ENCODE measurements at regions of chr9 and their contacts with region 1.

Region 1: DNA sequence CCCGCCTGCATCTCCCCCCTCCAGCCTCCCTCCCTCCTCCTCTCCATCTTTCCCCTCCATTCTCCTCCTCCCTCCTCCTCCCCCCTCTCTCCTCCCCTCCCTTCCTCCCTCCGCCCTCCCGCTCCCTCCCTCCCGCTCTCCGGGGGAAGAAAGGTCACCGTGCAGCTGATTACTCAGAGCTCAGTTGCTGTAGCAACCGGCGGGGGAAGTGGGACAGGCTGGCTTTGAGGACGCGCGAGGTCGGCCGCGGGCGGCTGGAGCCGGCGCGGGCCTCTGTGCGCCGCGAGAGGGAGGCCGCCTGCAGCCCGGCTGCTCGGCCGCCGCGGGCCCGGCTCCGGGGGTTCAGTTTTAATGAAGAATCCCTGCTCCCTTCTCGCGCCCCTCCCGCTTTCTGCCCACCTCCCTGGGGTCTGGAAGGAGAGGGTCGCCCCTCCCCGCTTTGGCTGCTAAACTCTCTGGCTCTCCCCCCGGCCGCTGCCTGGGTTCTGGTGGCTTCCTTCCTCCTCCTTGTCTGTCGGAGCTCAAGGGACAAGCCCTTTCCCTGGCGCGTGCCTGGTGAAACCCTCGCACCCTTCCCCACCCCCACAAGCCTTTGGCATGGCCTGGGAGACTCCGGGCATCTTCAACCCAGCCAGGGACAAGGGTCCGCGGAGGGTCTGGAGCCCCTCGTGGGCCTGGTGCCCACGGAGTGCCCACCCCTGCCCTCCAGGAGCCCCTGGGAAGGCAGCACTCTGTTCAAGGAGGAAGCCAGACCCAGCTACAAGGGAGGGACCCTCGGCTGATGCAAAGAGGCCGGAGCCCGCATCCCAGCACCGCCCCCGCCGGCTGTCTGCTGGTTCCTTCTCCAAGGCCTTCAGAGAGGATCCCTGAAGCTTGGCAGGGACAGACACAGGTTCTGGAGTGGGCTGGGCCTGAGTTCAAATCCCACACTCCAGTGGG is 160.3 kb downstream of the C9orf50 start:
- DNase-seq: peak; percentile 96
- H3K4me3 ChIP-seq: peak overlapping the region; percentile 55
- H3K27ac ChIP-seq: peak overlapping the region; percentile 99
- H3K27me3 ChIP-seq: no peaks in the 10 kb centered on the region
- CTCF ChIP-seq: peak; percentile 27; the same call in 1 of the 2 replicates

Region 2: DNA sequence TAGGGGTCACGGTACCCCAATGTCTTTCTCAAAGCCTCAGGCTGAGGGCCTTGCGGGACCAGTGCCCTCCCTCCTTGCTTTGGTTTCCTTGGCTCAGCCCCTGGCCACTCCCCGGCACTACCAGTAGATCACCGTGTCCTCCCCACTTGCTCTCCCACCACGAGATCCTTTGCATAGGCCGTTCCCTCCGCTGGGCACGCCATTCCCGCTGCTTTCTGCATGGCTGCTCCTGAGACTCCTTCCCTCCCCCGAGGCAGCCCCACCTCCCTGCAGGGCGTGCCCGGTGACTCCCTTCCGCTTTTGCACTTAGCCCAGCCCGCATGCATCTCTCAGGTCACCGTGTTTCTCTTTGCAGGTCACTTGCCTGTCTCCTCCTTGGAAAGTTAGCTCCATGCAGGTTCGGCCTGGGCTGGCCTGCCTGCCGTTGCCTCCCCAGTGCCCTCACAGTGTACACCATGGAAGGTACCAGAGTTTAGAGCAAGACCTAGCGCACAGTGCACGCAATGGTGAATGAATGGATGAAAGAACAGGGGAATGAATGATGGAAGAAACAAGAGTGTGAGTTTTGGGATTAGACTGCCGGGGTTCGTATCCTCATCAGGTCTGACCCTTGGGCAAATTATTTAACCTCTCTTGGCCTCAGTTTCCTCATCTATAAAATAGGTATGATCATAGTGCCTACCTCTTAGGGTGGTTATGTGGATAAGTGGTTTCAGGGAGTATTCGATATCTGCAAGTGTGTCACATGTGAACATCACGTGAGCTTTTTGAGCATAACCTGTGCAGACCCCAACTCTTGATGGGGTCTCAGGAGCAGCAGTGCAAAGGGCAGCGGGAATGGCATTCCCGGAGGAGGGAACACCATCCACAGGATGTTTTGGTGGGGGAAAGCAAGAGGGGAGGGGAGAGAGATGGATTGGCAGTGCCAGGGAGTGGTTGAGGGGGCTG is 54.0 kb before region 1 on chr9:
- CTCF ChIA-PET with region 1: no interaction called
- POLR2A ChIA-PET with region 1: no interaction called
- DNase-seq: no peak
- H3K4me3 ChIP-seq: no peak overlapping the region
- H3K27ac ChIP-seq: no peak overlapping the region
- H3K27me3 ChIP-seq: no peaks in the 10 kb centered on the region
- CTCF ChIP-seq: no peak

Region 3: DNA sequence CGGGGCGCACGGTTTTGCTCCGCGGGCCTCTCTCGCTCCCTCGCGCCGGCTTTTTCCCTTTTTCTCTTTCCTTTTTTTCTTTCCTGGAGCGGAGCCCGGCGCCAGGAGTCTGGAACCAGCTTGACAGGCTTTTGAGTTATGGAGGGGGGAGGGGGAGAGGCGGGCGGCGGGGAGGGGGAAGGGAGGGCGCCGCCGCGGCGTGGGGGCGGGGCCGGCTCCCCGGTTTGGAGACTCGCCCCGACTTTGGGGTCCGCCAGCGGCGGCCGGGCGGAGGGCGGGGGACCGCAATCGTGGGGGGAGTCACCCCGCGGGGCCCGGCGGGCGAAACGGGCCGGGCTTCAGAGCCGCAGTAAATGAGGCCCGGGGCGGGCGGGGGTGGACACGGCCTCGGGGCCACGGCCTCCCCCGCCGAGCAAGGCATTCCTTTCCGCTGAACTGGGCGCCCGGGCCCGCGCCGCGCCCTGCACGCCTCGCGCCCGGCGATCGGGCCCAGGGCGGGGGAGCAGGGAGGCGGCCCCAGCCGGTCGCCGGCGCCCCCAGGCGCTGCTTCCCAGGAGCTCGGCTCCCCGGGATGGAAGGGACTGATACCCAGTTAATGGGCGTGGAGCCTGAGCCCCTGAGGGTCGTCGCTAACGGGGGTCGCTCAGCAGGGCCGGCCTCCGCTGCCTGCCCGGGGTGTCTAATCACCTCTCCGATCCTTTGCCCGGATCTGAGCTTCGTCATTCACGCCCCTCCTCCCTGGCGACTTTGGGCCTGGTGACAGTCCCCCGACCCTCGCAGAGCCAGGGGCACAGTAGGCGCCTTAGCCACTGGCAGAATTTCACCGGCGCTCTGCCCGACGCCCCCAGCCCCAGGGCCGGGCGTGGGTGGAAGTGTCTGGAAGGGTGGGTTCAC is 22.2 kb after region 1 on chr9:
- CTCF ChIA-PET with region 1: interaction called, 3 read pairs
- POLR2A ChIA-PET with region 1: interaction called, 29 read pairs
- DNase-seq: no peak
- H3K4me3 ChIP-seq: peak overlapping the region; percentile 44
- H3K27ac ChIP-seq: peak overlapping the region; percentile 100
- H3K27me3 ChIP-seq: no peaks in the 10 kb centered on the region
- CTCF ChIP-seq: no peak

Region 4: DNA sequence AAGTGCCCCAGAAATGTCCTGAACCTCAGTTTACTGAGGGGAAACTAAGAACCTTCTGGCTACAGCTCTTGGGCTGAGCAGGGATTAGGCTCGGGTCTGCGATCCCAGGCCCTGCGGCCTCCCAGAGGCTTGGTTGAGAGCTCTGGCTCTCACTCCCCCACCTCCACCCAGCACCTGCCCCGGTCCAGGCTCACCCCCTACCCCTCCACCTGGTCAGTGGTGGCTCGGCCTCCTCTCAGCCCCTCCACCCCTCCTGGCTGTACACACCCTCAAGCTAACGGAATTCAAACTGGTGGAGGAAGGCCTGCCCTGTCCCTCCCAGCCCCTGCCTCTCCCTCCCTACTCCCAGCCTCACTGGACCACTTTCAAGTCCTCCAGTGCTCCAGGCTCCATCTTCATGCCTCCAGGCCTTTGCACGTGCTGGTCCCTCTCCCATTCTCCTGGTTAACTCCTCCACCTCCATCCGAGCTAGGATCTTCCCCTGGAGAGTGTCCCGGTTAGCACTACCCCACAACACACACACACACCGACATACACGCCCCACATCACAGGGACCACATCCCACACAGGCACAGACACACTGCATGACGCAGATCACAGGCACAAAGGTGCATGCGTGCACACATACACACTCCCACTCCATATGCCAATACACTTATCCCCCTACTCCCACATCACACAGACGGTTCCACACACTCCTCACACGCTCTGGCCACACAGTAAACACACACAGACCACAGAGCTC is 29.4 kb after region 1 on chr9:
- CTCF ChIA-PET with region 1: no interaction called
- POLR2A ChIA-PET with region 1: interaction called, 10 read pairs
- DNase-seq: no peak
- H3K4me3 ChIP-seq: peak overlapping the region; percentile 52
- H3K27ac ChIP-seq: peak overlapping the region; percentile 99
- H3K27me3 ChIP-seq: no peaks in the 10 kb centered on the region
- CTCF ChIP-seq: no peak

Region 5: DNA sequence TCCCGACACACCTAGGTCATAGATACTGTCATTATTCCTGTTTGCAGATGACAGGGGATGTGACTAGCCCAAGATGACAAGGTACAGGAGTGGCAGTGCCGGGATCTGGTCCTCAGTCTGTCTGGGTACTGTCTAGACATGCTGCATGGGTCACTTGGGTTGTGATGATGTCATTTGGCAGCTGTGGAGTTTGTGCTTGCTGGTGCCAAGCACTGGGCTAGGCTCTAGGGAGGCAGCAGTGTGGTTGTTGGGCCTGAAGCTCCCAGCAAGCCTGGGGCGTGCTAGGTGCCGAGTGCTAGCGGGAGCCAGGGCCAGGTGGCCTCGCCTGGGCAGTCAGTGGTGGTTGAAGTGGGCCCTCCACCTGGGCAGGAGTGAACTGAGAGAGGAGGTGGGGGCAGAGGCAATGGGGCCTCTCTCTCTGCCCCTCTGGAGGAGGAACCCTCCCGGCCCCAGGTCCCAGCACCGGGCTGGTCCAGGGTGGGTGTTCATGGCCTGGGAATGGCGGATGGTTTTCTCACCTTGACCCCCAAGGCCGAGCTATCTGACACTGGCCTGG is 190.2 kb after region 1 on chr9:
- CTCF ChIA-PET with region 1: no interaction called
- POLR2A ChIA-PET with region 1: no interaction called
- DNase-seq: no peak
- H3K4me3 ChIP-seq: no peak overlapping the region
- H3K27ac ChIP-seq: no peak overlapping the region
- H3K27me3 ChIP-seq: no peaks in the 10 kb centered on the region
- CTCF ChIP-seq: no peak

Measured in AG04450 (cell line).